B cell (primary cell): ENCODE measurements at regions of chr2 and their contacts with region 1.

Region 1: GRCh38 chr2:62705007-62705829 is at the start of gene EHBP1:
- DNase-seq: peak; percentile 98
- ATAC-seq: peak; percentile 93
- H3K4me3 ChIP-seq: peak within 1 kb of the TSS; percentile 67 to 85 (median 74)
- H3K4me3 Mint-ChIP-seq: peak within 1 kb of the TSS; percentile 93
- H3K27ac ChIP-seq: peak within 1 kb of the TSS; percentile 35 to 47
- H3K27ac Mint-ChIP-seq: peak within 1 kb of the TSS; percentile 80
- H3K4me1 ChIP-seq: peaks cover 20 to 21% of the 10 kb centered on the region in 2 donors
- H3K4me1 Mint-ChIP-seq: peaks cover 33% of the 10 kb centered on the region
- H3K27me3 ChIP-seq: no peaks in the 10 kb centered on the region
- H3K27me3 Mint-ChIP-seq: no peaks in the 10 kb centered on the region
- CTCF ChIP-seq: no peak
- total RNA-seq, gene EHBP1: 34.7 and 36.3 TPM in 2 replicates

Region 2: GRCh38 chr2:61327173-61327572 is 1378.0 kb before region 1 on chr2:
- CTCF ChIA-PET with region 1: no interaction called
- POLR2A ChIA-PET with region 1: interaction called, 10 read pairs
- intact Hi-C with region 1: no loop called
- DNase-seq: no peak
- ATAC-seq: no peak
- H3K4me3 ChIP-seq: no peak overlapping the region
- H3K4me3 Mint-ChIP-seq: no peak overlapping the region
- H3K27ac ChIP-seq: no peak overlapping the region
- H3K27ac Mint-ChIP-seq: no peak overlapping the region
- H3K4me1 ChIP-seq: no peaks in the 10 kb centered on the region
- H3K4me1 Mint-ChIP-seq: no peaks in the 10 kb centered on the region
- H3K27me3 ChIP-seq: no peaks in the 10 kb centered on the region
- H3K27me3 Mint-ChIP-seq: no peaks in the 10 kb centered on the region
- CTCF ChIP-seq: no peak

Region 3: GRCh38 chr2:61888267-61889055 is 816.8 kb before region 1 on chr2 and contains the start of gene CCT4:
- CTCF ChIA-PET with region 1: no interaction called
- POLR2A ChIA-PET with region 1: no interaction called
- intact Hi-C with region 1: loop called (anchors 2 kb)
- DNase-seq: peak; percentile 98
- ATAC-seq: peak; percentile 85
- H3K4me3 ChIP-seq: peak within 1 kb of the TSS; percentile 79 to 92 (median 89)
- H3K4me3 Mint-ChIP-seq: peak within 1 kb of the TSS; percentile 100
- H3K27ac ChIP-seq: peak within 1 kb of the TSS; percentile 95 to 96
- H3K27ac Mint-ChIP-seq: peak within 1 kb of the TSS; percentile 100
- H3K4me1 ChIP-seq: peaks cover 11 to 25% of the 10 kb centered on the region in 2 donors
- H3K4me1 Mint-ChIP-seq: peaks cover 32% of the 10 kb centered on the region
- H3K27me3 ChIP-seq: no peaks in the 10 kb centered on the region
- H3K27me3 Mint-ChIP-seq: no peaks in the 10 kb centered on the region
- CTCF ChIP-seq: no peak
- total RNA-seq, gene CCT4: 86.4 and 88.0 TPM in 2 replicates

Region 4: DNA sequence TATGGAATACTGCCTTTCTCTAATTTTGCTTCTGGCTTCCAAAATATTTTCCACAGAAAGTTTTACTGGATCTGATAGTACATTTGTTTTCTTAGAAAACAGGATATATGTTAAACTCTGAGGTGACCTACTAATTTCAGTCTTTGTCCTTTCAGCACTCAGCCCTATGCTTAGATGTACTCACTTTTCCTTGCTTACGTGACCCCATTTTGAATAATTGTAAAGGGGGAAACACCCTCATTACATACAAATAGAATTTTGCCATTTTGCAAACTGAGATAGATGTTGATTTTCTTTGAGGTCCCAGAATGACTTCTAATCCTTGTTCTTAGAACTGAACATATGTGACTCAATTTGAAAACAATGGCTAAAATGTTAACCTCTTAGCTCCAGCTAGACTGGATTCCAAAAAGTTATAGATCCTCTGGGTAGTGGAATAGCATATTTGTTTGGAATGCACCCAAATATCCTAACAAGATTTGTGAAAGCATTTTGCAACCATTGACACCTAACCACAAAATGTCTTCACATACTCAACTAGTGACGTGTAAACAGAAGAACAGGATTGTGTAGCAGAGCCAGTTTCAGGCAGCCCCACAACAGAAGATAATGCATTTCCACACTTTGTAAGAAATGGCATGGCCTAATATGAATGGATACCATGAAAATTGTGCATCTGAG is 44.5 kb before region 1 on chr2:
- CTCF ChIA-PET with region 1: no interaction called
- POLR2A ChIA-PET with region 1: no interaction called
- intact Hi-C with region 1: loop called (anchors 1 kb)
- DNase-seq: no peak
- ATAC-seq: no peak
- H3K4me3 ChIP-seq: peak overlapping the region in 1 of 5 experiments; percentile 33
- H3K4me3 Mint-ChIP-seq: peak overlapping the region; percentile 2
- H3K27ac ChIP-seq: peak overlapping the region in 1 of 2 donors; percentile 33
- H3K27ac Mint-ChIP-seq: no peak overlapping the region
- H3K4me1 ChIP-seq: peaks cover 18 to 27% of the 10 kb centered on the region in 2 donors
- H3K4me1 Mint-ChIP-seq: peaks cover 28% of the 10 kb centered on the region
- H3K27me3 ChIP-seq: no peaks in the 10 kb centered on the region
- H3K27me3 Mint-ChIP-seq: no peaks in the 10 kb centered on the region
- CTCF ChIP-seq: no peak

Region 5: GRCh38 chr2:63050334-63051041 is 345.3 kb after region 1 on chr2 and contains the start of gene OTX1:
- CTCF ChIA-PET with region 1: no interaction called
- POLR2A ChIA-PET with region 1: no interaction called
- intact Hi-C with region 1: loop called (anchors 5 kb)
- DNase-seq: peak; percentile 66
- ATAC-seq: peak; percentile 75
- H3K4me3 ChIP-seq: peak within 1 kb of the TSS; percentile 47 to 66 (median 48)
- H3K4me3 Mint-ChIP-seq: peak within 1 kb of the TSS; percentile 85
- H3K27ac ChIP-seq: no peak within 1 kb of the TSS
- H3K27ac Mint-ChIP-seq: peak within 1 kb of the TSS; percentile 7
- H3K4me1 ChIP-seq: peaks cover 84 to 86% of the 10 kb centered on the region in 2 donors
- H3K4me1 Mint-ChIP-seq: peaks cover 71% of the 10 kb centered on the region
- H3K27me3 ChIP-seq: peaks cover 1 to 96% (median 85%) of the 10 kb centered on the region in 4 experiments
- H3K27me3 Mint-ChIP-seq: peaks cover 83% of the 10 kb centered on the region
- CTCF ChIP-seq: no peak
- total RNA-seq, gene OTX1: not detected in 2 replicates

Region 6: GRCh38 chr2:63588385-63589147 is 883.3 kb after region 1 on chr2 and contains the starts of genes MDH1 and WDPCP:
- CTCF ChIA-PET with region 1: no interaction called
- POLR2A ChIA-PET with region 1: interaction called, 6 read pairs
- intact Hi-C with region 1: loop called (anchors 2 kb)
- DNase-seq: peak; percentile 98
- ATAC-seq: peak; percentile 84
- H3K4me3 ChIP-seq: peak within 1 kb of the TSS; percentile 93 to 98 (median 94)
- H3K4me3 Mint-ChIP-seq: peak within 1 kb of the TSS; percentile 91
- H3K27ac ChIP-seq: peak within 1 kb of the TSS; percentile 93 to 94
- H3K27ac Mint-ChIP-seq: peak within 1 kb of the TSS; percentile 93
- H3K4me1 ChIP-seq: peaks cover 14 to 19% of the 10 kb centered on the region in 2 donors
- H3K4me1 Mint-ChIP-seq: peaks cover 37% of the 10 kb centered on the region
- H3K27me3 ChIP-seq: no peaks in the 10 kb centered on the region
- H3K27me3 Mint-ChIP-seq: no peaks in the 10 kb centered on the region
- CTCF ChIP-seq: no peak
- total RNA-seq, gene MDH1: 87.8 and 95.6 TPM in 2 replicates
- total RNA-seq, gene WDPCP: 22.8 and 31.4 TPM in 2 replicates